ENCODE measurements at regions of chr12 and their contacts with region 1.

Region 1: GRCh38 chr12:102479099-102479887 is 1.1 kb downstream of the IGF1 start:
- DNase-seq: no peak
- ATAC-seq: no peak
- H3K4me3 ChIP-seq: no peak overlapping the region
- H3K27ac ChIP-seq: no peak overlapping the region
- H3K4me1 ChIP-seq: no peaks in the 10 kb centered on the region
- H3K27me3 ChIP-seq: peaks cover 0 to 1% of the 10 kb centered on the region in 2 experiments; a peak in 1 of 5 replicates
- CTCF ChIP-seq: no peak
- EP300 ChIP-seq: no peak
- POLR2A ChIP-seq: no peak
- RAD21 ChIP-seq: no peak

Region 2: GRCh38 chr12:102334765-102335164 is 144.5 kb before region 1 on chr12:
- CTCF ChIA-PET with region 1: no interaction called
- POLR2A ChIA-PET with region 1: no interaction called
- in situ Hi-C with region 1: no loop called
- intact Hi-C with region 1: loop called (anchors 1 kb)
- DNase-seq: no peak
- ATAC-seq: no peak
- H3K4me3 ChIP-seq: no peak overlapping the region
- H3K27ac ChIP-seq: no peak overlapping the region
- H3K4me1 ChIP-seq: no peaks in the 10 kb centered on the region
- H3K27me3 ChIP-seq: no peaks in the 10 kb centered on the region; a peak in 1 of 5 replicates
- CTCF ChIP-seq: no peak
- EP300 ChIP-seq: no peak
- POLR2A ChIP-seq: no peak
- RAD21 ChIP-seq: no peak

Region 3: DNA sequence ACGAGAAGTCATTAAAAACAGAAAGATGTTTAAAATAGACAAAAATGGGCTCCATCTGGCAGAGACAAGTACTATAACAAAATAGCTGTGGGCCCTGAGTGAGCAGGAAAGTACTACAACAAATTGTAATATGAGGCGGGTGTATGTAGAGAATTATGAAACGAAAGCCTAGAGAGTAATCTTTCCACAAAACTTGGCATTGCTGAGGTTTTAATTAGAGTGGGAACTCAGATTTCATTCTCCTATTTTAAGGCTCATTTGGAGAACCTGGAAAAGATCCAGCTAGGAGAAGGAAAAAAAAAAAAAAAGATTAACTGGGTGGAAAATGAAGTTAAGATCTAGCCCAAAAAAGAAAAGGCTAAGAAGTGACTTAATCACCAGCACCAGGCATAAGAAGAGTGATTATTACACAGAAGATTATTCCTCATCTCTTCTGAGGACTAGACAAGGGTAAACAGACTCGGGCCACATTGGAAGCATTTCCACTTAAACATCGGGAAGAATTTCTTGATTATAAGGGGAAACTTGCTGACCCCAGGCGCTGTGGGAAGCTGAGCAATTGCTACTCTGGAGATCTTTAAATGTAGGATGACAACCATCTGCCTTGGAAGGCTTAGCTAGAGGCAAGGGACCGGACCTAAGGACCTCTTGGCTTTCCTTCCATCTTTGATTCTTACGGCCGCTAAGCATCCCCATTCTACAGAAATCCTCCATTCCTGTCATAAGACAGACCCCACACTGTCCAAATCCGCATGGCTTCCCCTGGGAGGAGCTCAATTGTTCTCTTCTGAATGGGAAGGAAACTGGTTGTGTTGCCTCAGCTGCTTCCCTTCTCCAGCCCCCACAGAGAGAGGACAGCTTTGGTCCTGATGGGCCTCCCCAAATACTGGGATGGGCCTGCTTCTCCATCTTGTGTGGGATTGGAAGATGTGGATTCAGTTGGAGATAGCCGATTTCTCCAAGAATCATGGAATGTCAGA is 39.6 kb before region 1 on chr12:
- CTCF ChIA-PET with region 1: no interaction called
- POLR2A ChIA-PET with region 1: no interaction called
- in situ Hi-C with region 1: no loop called
- intact Hi-C with region 1: no loop called
- DNase-seq: no peak
- ATAC-seq: no peak
- H3K4me3 ChIP-seq: no peak overlapping the region
- H3K27ac ChIP-seq: no peak overlapping the region
- H3K4me1 ChIP-seq: 0 out of 2 replicates have a peak, but pooled peaks cover 6% of the 10 kb centered on the region
- H3K27me3 ChIP-seq: no peaks in the 10 kb centered on the region
- CTCF ChIP-seq: no peak
- EP300 ChIP-seq: no peak
- POLR2A ChIP-seq: no peak
- RAD21 ChIP-seq: no peak

Region 4: DNA sequence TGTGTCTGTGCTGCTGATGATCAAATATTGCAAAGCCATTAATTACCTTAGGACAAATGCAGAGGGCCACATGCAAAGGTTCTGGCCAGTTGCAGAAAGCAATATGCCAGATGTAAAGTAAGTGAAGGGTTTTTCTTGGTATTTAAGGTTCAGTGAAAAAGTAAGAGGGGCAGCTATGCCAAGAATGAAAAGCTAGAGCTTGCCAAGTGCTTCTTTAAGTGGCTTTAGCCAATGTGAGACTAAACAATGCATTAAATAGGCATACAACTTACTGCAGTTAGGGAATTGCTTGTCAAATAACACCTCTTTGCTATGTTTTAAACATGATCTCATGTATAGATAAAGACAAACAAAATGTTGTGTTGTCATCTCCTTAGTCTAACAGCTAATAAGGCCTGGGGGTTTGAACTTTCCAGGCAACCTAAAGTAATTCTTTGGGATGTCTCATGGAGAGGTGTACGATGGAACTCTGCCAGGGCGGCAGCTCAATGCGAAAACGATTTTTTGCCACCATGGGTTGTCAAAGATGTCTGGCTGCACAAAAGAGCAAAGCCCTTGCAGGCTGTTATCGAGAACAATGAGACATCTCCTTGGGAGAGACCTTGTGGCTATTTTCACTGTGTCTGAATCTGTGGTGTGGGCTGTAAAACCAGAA is 10.9 kb before region 1 on chr12:
- CTCF ChIA-PET with region 1: no interaction called
- POLR2A ChIA-PET with region 1: no interaction called
- in situ Hi-C with region 1: no loop called
- intact Hi-C with region 1: no loop called
- DNase-seq: no peak
- ATAC-seq: no peak
- H3K4me3 ChIP-seq: no peak overlapping the region
- H3K27ac ChIP-seq: no peak overlapping the region
- H3K4me1 ChIP-seq: no peaks in the 10 kb centered on the region
- H3K27me3 ChIP-seq: no peaks in the 10 kb centered on the region
- CTCF ChIP-seq: no peak
- EP300 ChIP-seq: no peak
- POLR2A ChIP-seq: no peak
- RAD21 ChIP-seq: no peak

Region 5: DNA sequence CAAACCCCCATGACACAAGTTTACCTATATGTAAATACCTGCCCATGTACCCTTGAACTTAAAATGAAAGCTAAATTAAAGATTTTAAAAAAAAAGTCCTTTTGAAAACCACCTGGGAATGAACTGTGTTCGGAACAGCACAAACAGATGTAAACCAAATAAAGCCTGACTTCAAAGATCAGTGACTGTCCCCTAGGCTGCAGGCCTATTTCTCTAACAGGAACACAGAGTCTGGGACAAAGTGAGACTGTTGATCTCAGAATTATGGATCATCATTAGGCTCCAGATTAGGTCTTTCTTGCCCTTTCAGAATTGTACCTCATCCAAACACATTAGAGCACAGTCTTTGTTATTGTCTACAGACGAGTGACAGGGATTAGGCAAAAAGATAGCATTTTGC is 383.2 kb after region 1 on chr12:
- CTCF ChIA-PET with region 1: no interaction called
- POLR2A ChIA-PET with region 1: no interaction called
- in situ Hi-C with region 1: no loop called
- intact Hi-C with region 1: no loop called
- DNase-seq: no peak
- ATAC-seq: peak; percentile 63
- H3K4me3 ChIP-seq: no peak overlapping the region
- H3K27ac ChIP-seq: peak overlapping the region; percentile 33
- H3K4me1 ChIP-seq: peaks cover 14% of the 10 kb centered on the region
- H3K27me3 ChIP-seq: no peaks in the 10 kb centered on the region
- CTCF ChIP-seq: no peak
- EP300 ChIP-seq: no peak
- POLR2A ChIP-seq: no peak
- RAD21 ChIP-seq: no peak

Measured in HepG2 (cell line).